Activated B cell treated with CpG ODN at 0.5 μM for 24 hours (primary cell): ENCODE measurements at regions of chrX and their contacts with region 1.

Region 1: DNA sequence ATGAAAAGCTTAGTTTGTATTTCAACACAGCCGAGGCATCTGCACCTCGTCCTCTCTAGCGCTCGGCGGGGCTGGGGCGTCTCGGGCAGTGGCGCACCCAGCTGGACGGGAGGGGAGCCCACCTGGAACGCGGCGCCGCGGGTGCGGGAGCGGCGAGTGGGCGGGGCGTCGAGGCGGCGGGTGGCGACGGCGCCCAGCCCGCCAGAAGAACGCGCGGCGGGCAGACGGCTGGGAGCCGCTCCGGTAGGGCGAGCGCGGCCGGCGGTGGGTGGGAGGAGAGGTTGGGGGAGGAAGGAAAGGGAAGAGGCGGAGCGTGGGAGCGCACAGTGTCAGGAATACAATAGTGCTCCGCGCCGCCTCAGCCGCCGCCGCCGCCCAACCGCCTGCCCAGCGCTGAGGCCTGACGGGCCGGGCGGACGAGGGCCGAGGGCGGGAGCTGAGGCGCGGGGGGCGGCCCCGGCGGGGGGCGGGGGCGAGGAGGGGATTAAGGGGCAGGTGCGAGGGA is at the start of gene JADE3:
- DNase-seq: peak; percentile 56
- ATAC-seq: peak; percentile 70
- H3K4me3 Mint-ChIP-seq: peak within 1 kb of the TSS; percentile 87
- H3K27ac Mint-ChIP-seq: no peak within 1 kb of the TSS
- H3K4me1 Mint-ChIP-seq: peaks cover 31% of the 10 kb centered on the region
- H3K27me3 Mint-ChIP-seq: no peaks in the 10 kb centered on the region
- CTCF ChIP-seq: no peak
- total RNA-seq, gene JADE3: 45.3 and 48.4 TPM in 2 replicates

Region 2: DNA sequence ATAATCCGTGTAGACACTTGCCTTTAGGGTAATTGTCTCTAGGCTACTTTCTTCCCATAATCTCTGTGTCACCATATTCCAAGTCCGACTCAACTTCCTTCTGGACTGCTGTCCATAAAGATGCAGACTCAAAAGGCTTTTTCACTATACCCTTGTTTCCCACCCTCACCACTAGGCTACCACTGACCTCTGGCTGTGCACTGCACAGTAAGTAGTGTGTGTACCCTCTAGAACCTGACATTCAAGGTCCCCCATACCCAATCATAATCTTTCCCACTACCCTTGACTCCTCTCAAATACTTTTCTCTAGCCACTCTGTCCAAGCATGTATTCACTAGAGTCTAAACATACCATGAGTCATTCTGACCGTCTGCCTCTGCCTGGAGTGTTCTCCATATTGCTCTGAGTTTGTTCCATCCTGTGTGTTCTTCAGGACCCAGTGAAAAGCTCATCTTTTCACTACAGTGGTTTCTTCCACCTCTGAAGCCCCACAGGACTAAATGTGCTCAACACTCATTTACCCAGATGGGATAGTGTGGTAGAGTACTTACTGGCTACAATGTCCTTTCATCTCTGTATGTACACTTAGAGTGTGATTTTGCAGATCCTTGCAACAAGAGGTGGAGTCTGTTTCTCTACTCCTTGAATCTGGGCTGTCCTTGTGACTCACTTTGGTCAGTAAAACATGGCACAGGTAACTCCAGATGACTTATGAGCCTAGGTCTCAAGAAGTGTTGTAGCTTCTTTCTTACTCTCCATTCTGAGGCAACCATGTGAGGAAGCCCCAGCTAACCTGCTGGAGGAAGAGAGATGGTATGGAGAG is 17.5 kb after region 1 on chrX:
- CTCF ChIA-PET with region 1: no interaction called
- POLR2A ChIA-PET with region 1: interaction called, 4 read pairs
- intact Hi-C with region 1: loop called (anchors 2 kb)
- DNase-seq: no peak
- ATAC-seq: no peak
- H3K4me3 Mint-ChIP-seq: no peak overlapping the region
- H3K27ac Mint-ChIP-seq: peak overlapping the region; percentile 10
- H3K4me1 Mint-ChIP-seq: peaks cover 43% of the 10 kb centered on the region
- H3K27me3 Mint-ChIP-seq: no peaks in the 10 kb centered on the region
- CTCF ChIP-seq: no peak

Region 3: GRCh38 chrX:46953597-46953996 is 41.4 kb after region 1 on chrX:
- CTCF ChIA-PET with region 1: no interaction called
- POLR2A ChIA-PET with region 1: interaction called, 3 read pairs
- intact Hi-C with region 1: loop called (anchors 5 kb)
- DNase-seq: no peak
- ATAC-seq: peak; percentile 62
- H3K4me3 Mint-ChIP-seq: peak overlapping the region; percentile 54
- H3K27ac Mint-ChIP-seq: peak overlapping the region; percentile 80
- H3K4me1 Mint-ChIP-seq: peaks cover 64% of the 10 kb centered on the region
- H3K27me3 Mint-ChIP-seq: no peaks in the 10 kb centered on the region
- CTCF ChIP-seq: no peak

Region 4: GRCh38 chrX:46961574-46962283 is 49.6 kb after region 1 on chrX:
- CTCF ChIA-PET with region 1: interaction called, 6 read pairs
- POLR2A ChIA-PET with region 1: interaction called, 22 read pairs
- intact Hi-C with region 1: no loop called
- DNase-seq: no peak
- ATAC-seq: peak; percentile 26
- H3K4me3 Mint-ChIP-seq: peak overlapping the region; percentile 66
- H3K27ac Mint-ChIP-seq: peak overlapping the region; percentile 90
- H3K4me1 Mint-ChIP-seq: peaks cover 89% of the 10 kb centered on the region
- H3K27me3 Mint-ChIP-seq: no peaks in the 10 kb centered on the region
- CTCF ChIP-seq: no peak

Region 5: DNA sequence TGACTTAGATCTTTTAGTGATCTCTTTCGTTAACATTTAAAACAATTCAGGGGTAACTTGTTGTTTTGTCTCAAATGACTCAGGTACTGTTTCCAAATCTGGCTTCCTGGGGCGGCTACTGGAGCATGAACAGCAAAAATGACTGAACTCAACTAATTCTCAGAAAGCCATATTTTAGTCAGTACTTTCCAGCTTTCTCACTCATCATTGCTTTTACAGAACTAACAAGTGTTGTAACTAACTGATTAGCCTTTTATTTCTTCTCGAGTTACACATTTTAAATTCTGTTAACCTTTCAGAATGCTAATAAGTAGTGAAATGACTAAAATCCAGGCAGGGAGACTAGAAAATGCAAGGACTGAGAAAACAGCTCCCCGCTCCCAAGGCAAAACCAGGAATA is 55.4 kb after region 1 on chrX:
- CTCF ChIA-PET with region 1: interaction called, 6 read pairs
- POLR2A ChIA-PET with region 1: interaction called, 22 read pairs
- intact Hi-C with region 1: loop called (anchors 2 kb)
- DNase-seq: no peak
- ATAC-seq: peak; percentile 54
- H3K4me3 Mint-ChIP-seq: peak overlapping the region; percentile 70
- H3K27ac Mint-ChIP-seq: peak overlapping the region; percentile 93
- H3K4me1 Mint-ChIP-seq: peaks cover 82% of the 10 kb centered on the region
- H3K27me3 Mint-ChIP-seq: no peaks in the 10 kb centered on the region
- CTCF ChIP-seq: no peak

Region 6: GRCh38 chrX:46978341-46979291 is 66.5 kb after region 1 on chrX:
- CTCF ChIA-PET with region 1: interaction called, 27 read pairs
- POLR2A ChIA-PET with region 1: interaction called, 12 read pairs
- intact Hi-C with region 1: loop called (anchors 1 kb)
- DNase-seq: peak; percentile 54
- ATAC-seq: peak; percentile 86
- H3K4me3 Mint-ChIP-seq: no peak overlapping the region
- H3K27ac Mint-ChIP-seq: peak overlapping the region; percentile 1
- H3K4me1 Mint-ChIP-seq: peaks cover 37% of the 10 kb centered on the region
- H3K27me3 Mint-ChIP-seq: no peaks in the 10 kb centered on the region
- CTCF ChIP-seq: no peak